ENCODE measurements at regions of chr1 and their contacts with region 1.

Region 1: GRCh38 chr1:185338719-185339622 is 21.9 kb upstream of the IVNS1ABP start:
- DNase-seq: peak in 8 of 9 donors; percentile 26 to 61 (median 53)
- ATAC-seq: peak; percentile 89
- H3K4me3 ChIP-seq: peak overlapping the region; percentile 2
- H3K4me3 Mint-ChIP-seq: peak overlapping the region; percentile 37 to 79 (median 61)
- H3K27ac ChIP-seq: peak overlapping the region; percentile 0
- H3K27ac Mint-ChIP-seq: peak overlapping the region; percentile 68 to 92 (median 80)
- H3K4me1 ChIP-seq: peaks cover 25 to 27% of the 10 kb centered on the region in 2 donors
- H3K4me1 Mint-ChIP-seq: peaks cover 20 to 47% (median 43%) of the 10 kb centered on the region in 7 donors
- H3K27me3 ChIP-seq: no peaks in the 10 kb centered on the region
- H3K27me3 Mint-ChIP-seq: peaks cover 0 to 3% (median 0%) of the 10 kb centered on the region in 5 donors

Region 2: DNA sequence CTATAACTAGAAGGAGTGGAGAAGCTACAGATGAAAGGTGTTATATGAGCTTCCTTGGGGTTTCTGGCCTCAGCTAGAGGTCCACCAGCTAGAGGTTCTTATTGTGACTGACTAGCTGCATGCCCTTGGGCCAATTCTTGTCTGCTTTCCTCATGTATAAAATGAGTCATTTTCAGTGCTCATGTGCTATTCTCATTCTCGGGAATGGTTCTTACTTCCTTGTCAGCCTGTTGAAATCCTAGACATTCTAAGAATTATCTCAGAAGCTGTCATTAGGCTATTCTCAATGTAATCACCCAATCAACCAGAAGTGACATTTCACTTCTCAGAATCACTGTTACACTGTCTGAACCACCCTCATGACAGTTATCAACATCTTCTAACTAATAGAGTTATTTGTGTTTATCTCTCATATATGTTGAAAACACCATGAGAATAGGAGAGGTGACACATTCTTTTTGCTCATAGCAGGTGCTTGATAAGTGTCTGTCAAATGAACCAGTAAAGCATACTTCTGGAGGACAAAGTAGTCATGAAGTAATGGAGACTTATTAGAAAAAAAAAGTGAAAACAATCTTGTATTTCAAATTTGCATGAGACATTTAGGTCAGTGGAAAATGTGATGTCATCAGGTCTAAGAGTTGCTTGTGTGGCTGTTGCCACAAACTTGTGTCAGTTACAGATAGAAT is 100.9 kb after region 1 on chr1:
- CTCF ChIA-PET with region 1: no interaction called
- POLR2A ChIA-PET with region 1: no interaction called
- intact Hi-C with region 1: loop called in 1 of 2 experiments (anchors 2 kb)
- DNase-seq: peak in 1 of 9 donors; percentile 34
- ATAC-seq: peak; percentile 80
- H3K4me3 ChIP-seq: no peak overlapping the region
- H3K4me3 Mint-ChIP-seq: no peak overlapping the region
- H3K27ac ChIP-seq: no peak overlapping the region
- H3K27ac Mint-ChIP-seq: no peak overlapping the region
- H3K4me1 ChIP-seq: peaks cover 0 to 20% of the 10 kb centered on the region in 2 donors
- H3K4me1 Mint-ChIP-seq: peaks cover 0 to 36% (median 3%) of the 10 kb centered on the region in 7 donors
- H3K27me3 ChIP-seq: no peaks in the 10 kb centered on the region
- H3K27me3 Mint-ChIP-seq: no peaks in the 10 kb centered on the region

Region 3: DNA sequence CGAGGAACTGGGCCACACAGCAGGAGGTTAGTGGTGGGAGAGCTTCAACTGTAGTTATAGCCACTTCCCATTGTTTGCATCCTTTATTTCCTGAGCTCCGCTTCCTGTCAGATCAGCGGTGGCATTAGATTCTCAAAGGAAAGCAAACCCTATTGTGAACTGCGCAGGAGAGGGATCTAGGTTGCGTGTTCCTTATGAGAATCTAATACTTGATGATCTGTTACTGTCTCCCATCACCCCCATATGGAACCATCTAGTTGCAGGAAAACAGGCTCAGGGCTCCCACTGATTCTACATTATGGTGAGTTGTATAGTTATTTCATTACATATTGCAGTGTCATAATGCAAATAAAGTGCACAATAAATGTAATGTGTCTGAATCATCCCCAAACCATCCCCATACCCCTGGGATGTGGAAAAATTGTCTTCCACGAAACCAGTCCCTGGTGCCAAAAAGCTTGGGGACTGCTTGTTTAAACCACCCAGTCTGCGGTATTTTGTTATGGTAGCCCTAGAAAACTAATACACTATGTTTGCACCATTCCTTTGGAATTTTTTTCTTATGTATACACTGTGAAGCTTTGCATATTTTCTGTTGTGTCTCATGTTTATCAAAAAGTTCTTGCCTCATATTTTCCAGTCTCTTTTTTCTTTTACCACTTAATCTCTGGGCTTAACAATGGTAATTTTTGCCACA is 114.7 kb after region 1 on chr1:
- CTCF ChIA-PET with region 1: no interaction called
- POLR2A ChIA-PET with region 1: no interaction called
- intact Hi-C with region 1: no loop called
- DNase-seq: no peak
- ATAC-seq: no peak
- H3K4me3 ChIP-seq: no peak overlapping the region
- H3K4me3 Mint-ChIP-seq: no peak overlapping the region
- H3K27ac ChIP-seq: no peak overlapping the region
- H3K27ac Mint-ChIP-seq: no peak overlapping the region
- H3K4me1 ChIP-seq: no peaks in the 10 kb centered on the region
- H3K4me1 Mint-ChIP-seq: peaks cover 0 to 6% (median 0%) of the 10 kb centered on the region in 7 donors
- H3K27me3 ChIP-seq: no peaks in the 10 kb centered on the region
- H3K27me3 Mint-ChIP-seq: peaks cover 0 to 2% (median 0%) of the 10 kb centered on the region in 5 donors